Caco-2 (cell line): ENCODE measurements at regions of chr12 and their contacts with region 1.

Region 1: GRCh38 chr12:5996459-5996858 is 51.4 kb upstream of the ANO2 start:
- DNase-seq: no peak
- H3K4me3 ChIP-seq: no peak overlapping the region
- H3K4me3 Mint-ChIP-seq: no peak overlapping the region
- H3K27ac Mint-ChIP-seq: no peak overlapping the region
- H3K4me1 ChIP-seq: no peaks in the 10 kb centered on the region
- H3K4me1 Mint-ChIP-seq: no peaks in the 10 kb centered on the region
- H3K27me3 ChIP-seq: no peaks in the 10 kb centered on the region; the same call in 1 of the 2 replicates
- H3K27me3 Mint-ChIP-seq: peaks cover 22% of the 10 kb centered on the region
- CTCF ChIP-seq: no peak

Region 2: DNA sequence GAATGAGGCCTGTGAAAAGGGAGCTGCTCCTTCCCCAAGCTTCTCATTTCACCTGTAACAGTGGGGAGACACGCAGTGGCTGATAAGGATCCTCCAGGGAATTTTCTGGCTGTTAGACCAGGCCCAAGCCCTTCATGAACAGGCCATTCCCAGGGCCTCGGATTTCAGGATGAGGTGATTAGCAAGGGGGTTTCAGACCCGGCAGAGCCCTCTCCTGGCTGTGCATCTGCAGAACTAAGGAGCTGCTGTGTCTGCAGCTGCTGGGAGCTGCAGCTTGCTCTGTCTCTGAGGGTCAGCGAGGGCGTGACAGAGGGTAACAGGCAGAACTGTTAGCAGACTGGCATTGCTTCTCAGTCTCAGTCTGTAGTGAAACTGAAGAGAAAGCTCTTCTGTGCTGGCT is 842.4 kb before region 1 on chr12:
- CTCF ChIA-PET with region 1: interaction called, 12 read pairs
- POLR2A ChIA-PET with region 1: no interaction called
- intact Hi-C with region 1: no loop called
- DNase-seq: no peak
- H3K4me3 ChIP-seq: no peak overlapping the region
- H3K4me3 Mint-ChIP-seq: no peak overlapping the region
- H3K27ac Mint-ChIP-seq: no peak overlapping the region
- H3K4me1 ChIP-seq: no peaks in the 10 kb centered on the region
- H3K4me1 Mint-ChIP-seq: no peaks in the 10 kb centered on the region
- H3K27me3 ChIP-seq: no peaks in the 10 kb centered on the region; the same call in 1 of the 2 replicates
- H3K27me3 Mint-ChIP-seq: peaks cover 51% of the 10 kb centered on the region
- CTCF ChIP-seq: no peak

Region 3: DNA sequence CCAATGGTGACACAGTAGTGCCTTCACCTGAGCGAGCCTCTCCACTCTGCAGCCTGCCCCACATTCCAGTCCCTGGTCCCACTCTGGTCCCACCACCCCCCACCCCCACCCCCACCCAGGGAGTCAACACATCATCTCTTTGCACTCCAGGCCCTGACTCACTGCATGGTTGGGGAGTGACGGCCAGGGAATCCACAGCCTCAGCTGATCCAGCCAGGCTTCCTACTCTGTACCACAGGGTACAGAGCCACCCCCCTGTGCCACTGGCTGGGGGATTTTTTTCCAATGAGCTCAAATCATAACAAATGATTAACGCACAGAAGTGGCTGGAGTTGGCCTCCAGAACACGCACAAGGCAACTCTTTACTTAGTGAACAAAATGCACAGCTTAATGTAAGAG is 330.8 kb before region 1 on chr12:
- CTCF ChIA-PET with region 1: no interaction called
- POLR2A ChIA-PET with region 1: no interaction called
- intact Hi-C with region 1: no loop called
- DNase-seq: no peak
- H3K4me3 ChIP-seq: no peak overlapping the region
- H3K4me3 Mint-ChIP-seq: no peak overlapping the region
- H3K27ac Mint-ChIP-seq: no peak overlapping the region
- H3K4me1 ChIP-seq: no peaks in the 10 kb centered on the region
- H3K4me1 Mint-ChIP-seq: no peaks in the 10 kb centered on the region
- H3K27me3 ChIP-seq: no peaks in the 10 kb centered on the region
- H3K27me3 Mint-ChIP-seq: no peaks in the 10 kb centered on the region
- CTCF ChIP-seq: no peak

Region 4: GRCh38 chr12:6047249-6048237 is 51.1 kb after region 1 on chr12:
- CTCF ChIA-PET with region 1: no interaction called
- POLR2A ChIA-PET with region 1: no interaction called
- intact Hi-C with region 1: no loop called
- DNase-seq: no peak
- H3K4me3 ChIP-seq: no peak overlapping the region
- H3K4me3 Mint-ChIP-seq: no peak overlapping the region
- H3K27ac Mint-ChIP-seq: no peak overlapping the region
- H3K4me1 ChIP-seq: no peaks in the 10 kb centered on the region; the same call in 1 of the 2 replicates
- H3K4me1 Mint-ChIP-seq: peaks cover 11% of the 10 kb centered on the region
- H3K27me3 ChIP-seq: no peaks in the 10 kb centered on the region
- H3K27me3 Mint-ChIP-seq: peaks cover 7% of the 10 kb centered on the region
- CTCF ChIP-seq: no peak